ENCODE measurements at regions of chr10 and their contacts with region 1.

Region 1: GRCh38 chr10:121418126-121418777 is 180.0 kb downstream of the FGFR2 start:
- DNase-seq: peak; percentile 72
- H3K4me3 Mint-ChIP-seq: no peak overlapping the region
- H3K27ac Mint-ChIP-seq: peak overlapping the region; percentile 0
- H3K4me1 Mint-ChIP-seq: peaks cover 26% of the 10 kb centered on the region
- H3K27me3 Mint-ChIP-seq: no peaks in the 10 kb centered on the region
- CTCF ChIP-seq: no peak

Region 2: GRCh38 chr10:120586471-120586872 is 831.8 kb before region 1 on chr10:
- CTCF ChIA-PET with region 1: no interaction called
- POLR2A ChIA-PET with region 1: no interaction called
- intact Hi-C with region 1: no loop called
- DNase-seq: peak; percentile 55
- H3K4me3 Mint-ChIP-seq: no peak overlapping the region
- H3K27ac Mint-ChIP-seq: no peak overlapping the region
- H3K4me1 Mint-ChIP-seq: no peaks in the 10 kb centered on the region
- H3K27me3 Mint-ChIP-seq: peaks cover 81% of the 10 kb centered on the region
- CTCF ChIP-seq: no peak

Region 3: GRCh38 chr10:121324678-121325213 is 93.5 kb before region 1 on chr10:
- CTCF ChIA-PET with region 1: no interaction called
- POLR2A ChIA-PET with region 1: interaction called, 3 read pairs
- intact Hi-C with region 1: loop called (anchors 5 kb)
- DNase-seq: peak; percentile 65
- H3K4me3 Mint-ChIP-seq: no peak overlapping the region
- H3K27ac Mint-ChIP-seq: no peak overlapping the region
- H3K4me1 Mint-ChIP-seq: peaks cover 43% of the 10 kb centered on the region
- H3K27me3 Mint-ChIP-seq: no peaks in the 10 kb centered on the region
- CTCF ChIP-seq: no peak

Region 4: DNA sequence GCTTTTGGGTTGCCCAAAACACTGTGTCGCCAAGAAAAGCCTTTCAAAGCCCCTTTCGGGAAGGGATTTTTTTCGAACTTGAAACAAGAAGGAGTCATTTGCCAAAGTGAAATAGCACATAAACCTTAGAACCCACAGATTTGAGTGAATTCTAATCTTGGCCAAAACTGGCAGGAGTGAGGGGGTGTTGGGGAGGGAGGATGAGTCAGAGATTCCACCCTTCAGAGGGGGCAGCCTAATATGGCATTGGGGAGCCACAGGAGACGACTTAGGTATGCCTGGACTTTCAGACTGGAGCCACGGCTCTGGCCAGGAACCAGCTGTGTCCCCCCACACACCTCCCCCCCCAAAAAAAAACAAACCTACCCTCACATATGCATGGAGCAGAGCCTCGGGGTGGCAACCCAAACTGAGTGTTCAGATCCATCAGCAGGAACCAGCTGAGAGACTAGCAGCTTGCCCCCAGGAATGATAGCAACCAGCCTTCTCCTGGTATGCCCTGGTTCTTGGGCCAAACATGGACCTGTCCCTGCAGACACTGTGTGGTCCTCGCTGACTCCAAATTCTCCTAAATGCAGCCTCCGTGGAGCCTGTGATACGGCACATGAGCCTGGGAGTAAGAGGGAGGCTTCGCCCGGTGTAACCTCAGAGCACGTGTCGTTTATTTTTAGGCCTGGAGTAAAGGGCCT is 41.7 kb after region 1 on chr10:
- CTCF ChIA-PET with region 1: no interaction called
- POLR2A ChIA-PET with region 1: no interaction called
- intact Hi-C with region 1: loop called (anchors 5 kb)
- DNase-seq: peak; percentile 66
- H3K4me3 Mint-ChIP-seq: peak overlapping the region; percentile 15
- H3K27ac Mint-ChIP-seq: peak overlapping the region; percentile 74
- H3K4me1 Mint-ChIP-seq: peaks cover 16% of the 10 kb centered on the region
- H3K27me3 Mint-ChIP-seq: no peaks in the 10 kb centered on the region
- CTCF ChIP-seq: no peak

Measured in MCF 10A (cell line).